GM10248 (cell line): ENCODE measurements at regions of chr10 and their contacts with region 1.

Region 1: GRCh38 chr10:102352066-102352715 is 43.3 kb upstream of the NFKB2 start:
- DNase-seq: peak; percentile 72
- CTCF ChIP-seq: peak; percentile 89

Region 2: GRCh38 chr10:102185811-102186527 is 166.2 kb before region 1 on chr10:
- CTCF ChIA-PET with region 1: interaction called, 24 read pairs
- POLR2A ChIA-PET with region 1: no interaction called
- DNase-seq: no peak
- CTCF ChIP-seq: no peak

Region 3: GRCh38 chr10:102268375-102268888 is 83.8 kb before region 1 on chr10:
- CTCF ChIA-PET with region 1: interaction called, 24 read pairs
- POLR2A ChIA-PET with region 1: no interaction called
- DNase-seq: no peak
- CTCF ChIP-seq: no peak

Region 4: GRCh38 chr10:102310361-102311024 is 41.7 kb before region 1 on chr10:
- CTCF ChIA-PET with region 1: interaction called, 38 read pairs
- POLR2A ChIA-PET with region 1: no interaction called
- DNase-seq: no peak
- CTCF ChIP-seq: no peak

Region 5: DNA sequence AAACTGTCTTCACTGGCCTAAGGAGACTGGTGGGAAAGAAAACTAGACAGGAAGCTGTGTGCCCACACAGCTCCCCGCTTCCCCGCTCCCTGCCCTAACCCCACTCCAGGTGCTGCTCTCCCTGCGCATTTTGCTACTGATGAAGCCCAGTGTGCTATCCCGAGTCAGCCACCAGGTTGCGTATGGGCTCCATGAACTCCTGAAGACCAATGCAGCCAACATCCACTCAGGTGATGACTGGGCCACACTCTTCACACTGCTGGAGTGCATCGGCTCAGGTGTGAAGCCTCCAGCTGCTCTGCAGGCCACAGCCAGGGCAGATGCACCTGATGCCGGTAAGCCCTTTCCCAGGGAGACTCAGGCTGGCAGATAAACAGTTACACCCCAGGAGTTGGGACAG is 23.1 kb after region 1 on chr10:
- CTCF ChIA-PET with region 1: interaction called, 85 read pairs
- POLR2A ChIA-PET with region 1: no interaction called
- DNase-seq: no peak
- CTCF ChIP-seq: no peak

Region 6: GRCh38 chr10:102394079-102394800 is 42.0 kb after region 1 on chr10:
- CTCF ChIA-PET with region 1: interaction called, 13 read pairs
- POLR2A ChIA-PET with region 1: no interaction called
- DNase-seq: peak; percentile 98
- CTCF ChIP-seq: no peak

Region 7: GRCh38 chr10:102432162-102432950 is 80.2 kb after region 1 on chr10 and contains the start of gene CUEDC2:
- CTCF ChIA-PET with region 1: no interaction called
- POLR2A ChIA-PET with region 1: no interaction called
- DNase-seq: peak; percentile 94
- CTCF ChIP-seq: no peak

Region 8: GRCh38 chr10:102444851-102445250 is 92.7 kb after region 1 on chr10:
- CTCF ChIA-PET with region 1: no interaction called
- POLR2A ChIA-PET with region 1: no interaction called
- DNase-seq: no peak
- CTCF ChIP-seq: no peak

Region 9: GRCh38 chr10:102485093-102485784 is 133.0 kb after region 1 on chr10:
- CTCF ChIA-PET with region 1: no interaction called
- POLR2A ChIA-PET with region 1: no interaction called
- DNase-seq: no peak
- CTCF ChIP-seq: no peak